ENCODE measurements at regions of chr3 and their contacts with region 1.

Region 1: GRCh38 chr3:33658991-33659848 is 58.8 kb downstream of the CLASP2 start:
- DNase-seq: peak; percentile 36 to 56
- H3K4me3 ChIP-seq: peak overlapping the region; percentile 39 to 63 (median 47)
- H3K27ac ChIP-seq: peak overlapping the region; percentile 75 to 80
- H3K4me1 ChIP-seq: no peaks in the 10 kb centered on the region
- H3K27me3 ChIP-seq: no peaks in the 10 kb centered on the region
- CTCF ChIP-seq: no peak
- POLR2A ChIP-seq: no peak

Region 2: DNA sequence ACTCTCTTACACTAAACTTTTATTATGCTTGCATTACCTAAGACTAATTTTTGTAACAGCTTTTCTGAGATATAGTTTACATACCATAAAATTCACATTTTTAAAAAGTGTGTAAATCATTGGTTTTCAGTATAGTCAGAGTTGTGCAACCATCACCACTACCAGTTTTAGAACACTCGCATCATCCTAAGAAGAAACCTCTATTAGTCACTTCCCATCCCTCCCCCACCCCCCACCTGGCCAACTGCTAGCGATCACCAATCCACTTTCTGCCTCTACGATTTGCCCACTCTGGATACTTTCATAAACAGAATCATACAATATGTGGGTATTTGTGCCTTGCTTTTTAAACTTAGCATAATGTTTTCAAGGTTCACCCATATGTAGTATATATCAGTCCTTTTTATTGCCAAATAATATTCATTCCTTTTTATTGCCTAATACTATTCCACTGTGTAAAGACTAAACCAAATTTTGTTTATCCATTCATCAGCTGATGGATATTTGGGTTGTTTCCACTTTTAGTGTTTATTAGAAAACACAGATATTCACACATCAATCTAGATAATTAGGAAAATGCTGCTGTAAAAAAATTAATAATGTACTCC is 242.1 kb before region 1 on chr3:
- intact Hi-C with region 1: no loop called
- DNase-seq: no peak
- H3K4me3 ChIP-seq: no peak overlapping the region
- H3K27ac ChIP-seq: no peak overlapping the region
- H3K4me1 ChIP-seq: no peaks in the 10 kb centered on the region
- H3K27me3 ChIP-seq: no peaks in the 10 kb centered on the region
- CTCF ChIP-seq: no peak
- POLR2A ChIP-seq: no peak

Region 3: GRCh38 chr3:33775363-33775762 is 116.1 kb after region 1 on chr3:
- intact Hi-C with region 1: loop called (anchors 5 kb)
- DNase-seq: no peak
- H3K4me3 ChIP-seq: no peak overlapping the region
- H3K27ac ChIP-seq: no peak overlapping the region
- H3K4me1 ChIP-seq: no peaks in the 10 kb centered on the region
- H3K27me3 ChIP-seq: no peaks in the 10 kb centered on the region
- CTCF ChIP-seq: no peak
- POLR2A ChIP-seq: no peak

Region 4: GRCh38 chr3:34568766-34569165 is 909.5 kb after region 1 on chr3:
- intact Hi-C with region 1: loop called (anchors 10 kb)
- DNase-seq: no peak
- H3K4me3 ChIP-seq: no peak overlapping the region
- H3K27ac ChIP-seq: no peak overlapping the region
- H3K4me1 ChIP-seq: no peaks in the 10 kb centered on the region
- H3K27me3 ChIP-seq: no peaks in the 10 kb centered on the region
- CTCF ChIP-seq: no peak
- POLR2A ChIP-seq: no peak

Measured in breast epithelium (tissue), 4 donors.